HAP-1 (cell line): ENCODE measurements at regions of chr11 and their contacts with region 1.

Region 1: GRCh38 chr11:66820381-66820780 is 22.9 kb upstream of the RCE1 start:
- DNase-seq: peak in 1 of 2 experiments; percentile 53
- H3K4me3 ChIP-seq: no peak overlapping the region
- H3K4me1 ChIP-seq: peaks cover 10% of the 10 kb centered on the region
- H3K27me3 ChIP-seq: no peaks in the 10 kb centered on the region

Region 2: GRCh38 chr11:66718320-66719036 is 101.9 kb before region 1 on chr11:
- in situ Hi-C with region 1: loop called (anchors 10 kb)
- DNase-seq: no peak
- H3K4me3 ChIP-seq: no peak overlapping the region
- H3K4me1 ChIP-seq: 0 out of 2 replicates have a peak, but pooled peaks cover 1% of the 10 kb centered on the region
- H3K27me3 ChIP-seq: no peaks in the 10 kb centered on the region